Esophagus muscularis mucosa (tissue), 4 donors: ENCODE measurements at regions of chr10 and their contacts with region 1.

Region 1: DNA sequence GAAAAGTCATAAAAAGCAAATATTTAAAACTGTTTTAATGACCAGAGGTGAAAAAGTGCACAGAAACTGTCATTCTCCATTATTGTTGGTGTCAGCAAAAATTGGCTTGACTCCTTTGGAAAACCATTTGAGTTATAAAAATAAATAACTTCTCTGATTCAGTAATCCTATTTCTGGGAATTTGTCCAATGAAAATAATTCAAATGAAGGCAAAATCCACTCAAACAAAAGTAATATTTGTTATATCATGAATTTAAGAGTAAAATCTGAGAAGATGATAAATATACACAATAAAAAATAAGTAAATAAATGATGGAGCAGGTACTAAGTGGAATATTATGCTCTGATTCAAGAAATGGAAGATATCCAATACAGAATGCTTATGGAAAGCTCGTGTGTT is 326.6 kb upstream of the KLF6 start:
- DNase-seq: no peak
- H3K4me3 ChIP-seq: no peak overlapping the region
- H3K27ac ChIP-seq: no peak overlapping the region
- H3K4me1 ChIP-seq: peaks cover 0 to 15% (median 4%) of the 10 kb centered on the region in 4 donors
- H3K27me3 ChIP-seq: no peaks in the 10 kb centered on the region
- CTCF ChIP-seq: no peak
- EP300 ChIP-seq: no peak
- POLR2A ChIP-seq: no peak

Region 2: DNA sequence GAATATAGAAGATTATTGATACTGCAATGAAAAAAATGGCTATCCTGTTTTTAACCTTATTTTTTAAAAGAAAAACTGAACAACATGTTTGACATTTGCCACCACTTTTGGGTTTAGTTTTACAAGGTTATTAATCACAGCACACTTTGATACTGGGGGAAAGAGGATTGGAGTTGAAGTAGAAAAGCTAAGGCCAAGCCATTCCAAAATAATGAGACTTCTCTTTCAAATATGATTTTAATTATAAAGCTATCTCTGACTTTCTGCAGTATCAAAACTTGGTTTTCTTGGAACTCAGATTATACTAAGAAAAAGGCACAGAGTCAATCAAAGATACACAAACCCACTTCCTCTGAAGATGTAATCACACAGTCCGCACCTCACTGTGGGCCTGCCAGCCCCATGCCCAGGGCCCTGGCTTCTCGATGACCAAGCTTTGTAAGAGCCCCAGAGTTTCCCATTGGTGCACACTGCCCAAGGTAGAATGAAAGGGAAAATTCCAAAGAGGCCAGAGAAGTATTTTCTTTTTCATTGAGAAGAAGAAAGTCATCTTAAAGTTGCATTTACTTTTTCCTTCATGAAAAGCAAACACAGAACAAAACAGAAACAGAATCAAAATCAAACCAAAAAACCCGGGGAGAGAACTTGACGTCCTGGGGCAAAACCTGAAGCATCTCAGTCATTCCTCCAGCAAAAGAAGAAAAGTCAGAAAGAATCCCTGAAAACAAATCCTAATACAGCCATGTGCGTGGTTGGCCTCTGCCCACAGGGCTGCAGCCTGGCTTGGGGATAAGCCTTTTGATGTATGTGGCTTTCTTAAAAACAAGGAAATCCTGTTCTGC is 139.0 kb before region 1 on chr10:
- intact Hi-C with region 1: loop called (anchors 10 kb)
- DNase-seq: peak; percentile 89
- H3K4me3 ChIP-seq: no peak overlapping the region
- H3K27ac ChIP-seq: peak overlapping the region in 1 of 4 donors; percentile 3
- H3K4me1 ChIP-seq: no peaks in the 10 kb centered on the region
- H3K27me3 ChIP-seq: no peaks in the 10 kb centered on the region
- CTCF ChIP-seq: no peak
- EP300 ChIP-seq: no peak
- POLR2A ChIP-seq: no peak